ENCODE measurements at regions of chr5 and their contacts with region 1.

Region 1: GRCh38 chr5:43105369-43106289 is 15.1 kb upstream of the ZNF131 start:
- DNase-seq: peak; percentile 90 to 99 (median 92)
- ATAC-seq: peak; percentile 96
- H3K4me3 ChIP-seq: peak overlapping the region; percentile 35
- H3K27ac ChIP-seq: peak overlapping the region; percentile 79
- H3K4me1 ChIP-seq: peaks cover 0 to 7% of the 10 kb centered on the region in 2 experiments; a peak in 2 of 5 replicates
- H3K27me3 ChIP-seq: no peaks in the 10 kb centered on the region
- CTCF ChIP-seq: peak; percentile 100
- EP300 ChIP-seq: no peak
- POLR2A ChIP-seq: no peak
- RAD21 ChIP-seq: peak; percentile 99

Region 2: GRCh38 chr5:42908509-42909488 is 196.8 kb before region 1 on chr5:
- CTCF ChIA-PET with region 1: interaction called, 6 read pairs
- POLR2A ChIA-PET with region 1: interaction called, 3 read pairs
- in situ Hi-C with region 1: no loop called
- intact Hi-C with region 1: loop called (anchors 2 kb)
- DNase-seq: peak; percentile 85 to 96 (median 88)
- ATAC-seq: peak; percentile 95
- H3K4me3 ChIP-seq: peak overlapping the region; percentile 31
- H3K27ac ChIP-seq: no peak overlapping the region
- H3K4me1 ChIP-seq: peaks cover 3 to 6% of the 10 kb centered on the region in 2 experiments; a peak in 2 of 5 replicates
- H3K27me3 ChIP-seq: peaks cover 3 to 7% of the 10 kb centered on the region in 2 experiments; a peak in 3 of 5 replicates
- CTCF ChIP-seq: peak; percentile 90 to 97 (median 92)
- EP300 ChIP-seq: no peak; the same call in 1 of the 2 replicates
- POLR2A ChIP-seq: no peak
- RAD21 ChIP-seq: peak; percentile 82 to 91

Region 3: GRCh38 chr5:43066799-43067741 is 38.6 kb before region 1 on chr5:
- CTCF ChIA-PET with region 1: interaction called, 32 read pairs
- POLR2A ChIA-PET with region 1: interaction called, 3 read pairs
- in situ Hi-C with region 1: no loop called
- intact Hi-C with region 1: no loop called
- DNase-seq: peak; percentile 45 to 95 (median 58)
- ATAC-seq: peak; percentile 60
- H3K4me3 ChIP-seq: peak overlapping the region; percentile 80
- H3K27ac ChIP-seq: peak overlapping the region; percentile 97
- H3K4me1 ChIP-seq: peaks cover 14 to 25% of the 10 kb centered on the region in 2 experiments
- H3K27me3 ChIP-seq: no peaks in the 10 kb centered on the region; a peak in 1 of 5 replicates
- CTCF ChIP-seq: 0 out of 6 replicates have a peak, but pooled peaks of 1 of the 3 experiments have one; percentile 2
- EP300 ChIP-seq: peak; percentile 100
- POLR2A ChIP-seq: peak; percentile 78
- RAD21 ChIP-seq: no peak

Region 4: DNA sequence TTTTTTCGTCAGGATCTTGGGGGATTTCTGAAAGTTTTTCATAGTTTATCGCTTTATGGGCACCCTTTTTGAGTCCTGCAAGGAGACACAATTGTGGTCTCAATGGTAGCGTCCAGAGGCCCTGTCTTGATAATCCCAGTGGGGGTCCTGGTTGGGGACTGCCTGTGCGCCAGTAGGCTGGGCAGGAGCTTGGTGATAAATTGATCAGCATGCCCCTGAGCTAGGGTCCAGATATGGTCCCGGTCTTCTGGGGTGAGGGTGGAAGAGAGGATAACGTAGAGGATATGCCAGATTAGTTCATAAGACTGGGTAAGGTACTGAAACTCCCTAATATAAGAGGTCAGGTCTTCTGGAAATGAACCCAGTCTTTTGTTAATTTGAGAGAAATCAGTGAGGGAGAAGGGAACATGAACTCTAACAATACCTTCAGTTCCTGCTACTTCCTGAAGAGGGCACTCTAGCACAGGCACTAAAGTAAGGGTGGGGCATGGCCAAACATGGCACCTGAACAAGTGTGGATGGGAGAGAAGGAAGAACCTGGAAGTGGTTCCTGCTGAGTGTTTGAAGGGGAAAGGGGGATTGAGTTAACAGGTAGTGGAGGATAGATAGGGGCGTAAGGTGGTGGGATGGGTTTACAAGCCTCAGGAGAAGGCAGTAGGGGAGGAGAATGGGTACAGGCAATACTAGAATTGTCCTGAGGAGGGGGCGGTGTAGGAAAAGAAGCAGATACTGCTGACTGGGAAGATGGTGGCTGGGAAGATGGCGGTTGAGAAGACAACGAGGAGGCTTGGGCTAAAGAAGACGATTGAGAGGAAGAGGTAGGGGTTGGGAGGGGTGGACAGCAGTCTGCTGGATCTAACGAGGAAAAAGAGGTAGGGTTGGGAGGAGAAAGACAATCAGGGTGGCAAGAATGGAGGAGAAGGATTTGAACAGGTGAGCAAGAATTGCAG is 31.8 kb before region 1 on chr5:
- CTCF ChIA-PET with region 1: interaction called, 32 read pairs
- POLR2A ChIA-PET with region 1: interaction called, 4 read pairs
- in situ Hi-C with region 1: no loop called
- intact Hi-C with region 1: loop called (anchors 1 kb)
- DNase-seq: peak; percentile 63 to 86 (median 68)
- ATAC-seq: peak; percentile 63
- H3K4me3 ChIP-seq: no peak overlapping the region
- H3K27ac ChIP-seq: peak overlapping the region; percentile 90
- H3K4me1 ChIP-seq: peaks cover 17 to 37% of the 10 kb centered on the region in 2 experiments
- H3K27me3 ChIP-seq: no peaks in the 10 kb centered on the region
- CTCF ChIP-seq: peak; percentile 84 to 93 (median 85)
- EP300 ChIP-seq: no peak
- POLR2A ChIP-seq: peak; percentile 53
- RAD21 ChIP-seq: peak; percentile 95

Region 5: DNA sequence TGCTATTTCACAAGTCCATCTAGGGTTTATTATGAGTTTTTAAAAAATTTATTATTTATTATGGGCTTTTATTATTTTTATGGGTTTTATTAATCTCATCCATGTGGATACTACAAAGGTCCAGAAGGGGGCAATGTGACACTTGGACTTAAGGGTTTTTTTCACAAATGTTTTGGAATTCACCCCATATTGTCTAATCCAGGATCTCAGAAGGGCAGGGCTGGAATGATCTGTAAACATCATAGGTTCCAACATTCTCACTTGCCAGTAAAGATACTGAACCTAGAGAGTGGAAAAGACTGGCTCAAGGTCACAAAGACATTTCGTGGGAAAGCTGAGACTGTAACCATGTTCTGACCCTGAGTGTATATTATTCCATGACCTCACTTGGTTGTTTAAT is 122.0 kb after region 1 on chr5:
- CTCF ChIA-PET with region 1: no interaction called
- POLR2A ChIA-PET with region 1: no interaction called
- in situ Hi-C with region 1: no loop called
- intact Hi-C with region 1: loop called (anchors 2 kb)
- DNase-seq: peak; percentile 41 to 72 (median 49)
- ATAC-seq: peak; percentile 53; the same call in 2 of the 3 replicates
- H3K4me3 ChIP-seq: no peak overlapping the region
- H3K27ac ChIP-seq: no peak overlapping the region
- H3K4me1 ChIP-seq: peaks cover 0 to 16% of the 10 kb centered on the region in 2 experiments; a peak in 3 of 5 replicates
- H3K27me3 ChIP-seq: no peaks in the 10 kb centered on the region
- CTCF ChIP-seq: peak; percentile 54 to 86 (median 57); a peak in 4 of 6 replicates
- EP300 ChIP-seq: no peak
- POLR2A ChIP-seq: no peak
- RAD21 ChIP-seq: peak; percentile 82 to 87

Region 6: DNA sequence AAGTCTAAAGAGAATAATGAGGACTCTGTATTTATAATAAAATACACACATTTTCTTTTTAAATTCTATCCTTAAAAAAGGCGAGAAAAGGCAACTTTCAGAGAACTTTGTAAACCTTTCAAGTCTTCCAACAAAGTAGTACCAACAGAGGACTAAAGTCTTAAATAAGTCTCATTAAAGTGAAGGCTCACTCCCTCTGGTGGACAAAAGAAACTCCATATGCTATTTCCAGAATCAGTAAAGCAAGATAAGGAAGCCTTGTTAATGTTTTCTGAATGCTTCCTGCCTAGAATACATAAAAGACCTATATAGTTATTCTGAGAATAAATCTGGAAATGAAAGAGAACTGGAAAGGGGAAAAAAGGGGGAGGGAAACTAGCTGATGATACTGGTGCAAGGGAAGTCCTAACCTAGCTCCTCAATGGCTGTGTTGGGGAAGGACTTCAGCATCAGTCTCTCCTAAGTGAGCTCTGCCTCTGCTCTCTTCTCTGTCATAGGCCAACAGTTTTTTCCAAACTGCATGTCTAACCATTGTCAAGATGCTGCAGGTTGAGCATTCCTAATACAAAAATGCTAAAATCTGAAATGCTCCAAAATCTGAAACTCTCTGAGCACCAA is 200.4 kb after region 1 on chr5:
- CTCF ChIA-PET with region 1: interaction called, 3 read pairs
- POLR2A ChIA-PET with region 1: no interaction called
- in situ Hi-C with region 1: no loop called
- intact Hi-C with region 1: loop called (anchors 2 kb)
- DNase-seq: peak; percentile 41 to 85 (median 44)
- ATAC-seq: peak; percentile 78
- H3K4me3 ChIP-seq: no peak overlapping the region
- H3K27ac ChIP-seq: no peak overlapping the region
- H3K4me1 ChIP-seq: peaks cover 11 to 57% of the 10 kb centered on the region in 2 experiments
- H3K27me3 ChIP-seq: no peaks in the 10 kb centered on the region
- CTCF ChIP-seq: peak; percentile 62 to 83 (median 72); a peak in 5 of 6 replicates
- EP300 ChIP-seq: no peak
- POLR2A ChIP-seq: no peak
- RAD21 ChIP-seq: peak; percentile 83 to 85

Region 7: DNA sequence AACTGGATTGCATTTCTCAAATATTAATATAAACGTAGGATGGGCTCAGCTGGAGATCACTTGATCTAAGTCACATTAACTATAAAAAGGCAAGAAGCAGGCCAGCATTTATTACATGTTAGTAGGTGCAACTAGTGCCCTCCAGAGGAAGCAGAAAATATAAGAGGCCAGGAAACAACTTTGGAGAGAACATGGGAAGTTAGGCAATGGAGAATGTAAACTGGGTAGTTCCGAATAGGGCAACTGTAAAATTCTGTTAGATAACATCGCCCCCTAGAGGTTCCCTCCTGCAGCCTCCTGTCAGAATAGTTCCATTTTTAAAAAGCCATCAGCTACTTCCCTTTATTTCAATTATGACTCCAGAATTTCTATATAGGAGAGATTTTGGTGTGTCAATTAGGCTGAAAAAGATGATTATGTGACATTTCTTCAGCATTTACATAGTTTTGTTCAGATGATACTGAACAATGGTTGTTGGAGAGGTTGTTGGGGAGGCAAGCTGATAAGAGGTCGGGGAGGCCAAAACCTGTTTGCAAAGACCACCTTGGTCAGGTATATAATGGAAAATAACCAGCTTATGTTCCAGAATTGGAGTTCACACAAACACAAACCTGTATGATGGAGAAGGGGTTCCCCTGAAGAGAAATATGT is 284.2 kb after region 1 on chr5:
- CTCF ChIA-PET with region 1: interaction called, 26 read pairs
- POLR2A ChIA-PET with region 1: no interaction called
- in situ Hi-C with region 1: no loop called
- intact Hi-C with region 1: loop called (anchors 1 kb)
- DNase-seq: peak; percentile 77 to 92 (median 84)
- ATAC-seq: peak; percentile 97
- H3K4me3 ChIP-seq: no peak overlapping the region
- H3K27ac ChIP-seq: no peak overlapping the region
- H3K4me1 ChIP-seq: no peaks in the 10 kb centered on the region
- H3K27me3 ChIP-seq: no peaks in the 10 kb centered on the region
- CTCF ChIP-seq: peak; percentile 88 to 99 (median 96)
- EP300 ChIP-seq: peak; percentile 48; the same call in 1 of the 2 replicates
- POLR2A ChIP-seq: no peak
- RAD21 ChIP-seq: peak; percentile 99